Activated CD4-positive, alpha-beta T cell treated with anti-CD3 and anti-CD28 coated beads, Interleukin-2, amount 10 ng/mL, durations not matched to agents 7 days and 5 days (primary cell): ENCODE measurements at regions of chr20 and their contacts with region 1.

Region 1: GRCh38 chr20:64255361-64256281 is at the start of gene PCMTD2:
- DNase-seq: peak; percentile 83
- H3K4me3 Mint-ChIP-seq: peak within 1 kb of the TSS; percentile 88
- H3K27ac Mint-ChIP-seq: peak within 1 kb of the TSS; percentile 95
- H3K4me1 Mint-ChIP-seq: peaks cover 48% of the 10 kb centered on the region
- H3K27me3 Mint-ChIP-seq: peaks cover 11% of the 10 kb centered on the region
- total RNA-seq, gene PCMTD2: 68.4 to 69.3 TPM

Region 2: DNA sequence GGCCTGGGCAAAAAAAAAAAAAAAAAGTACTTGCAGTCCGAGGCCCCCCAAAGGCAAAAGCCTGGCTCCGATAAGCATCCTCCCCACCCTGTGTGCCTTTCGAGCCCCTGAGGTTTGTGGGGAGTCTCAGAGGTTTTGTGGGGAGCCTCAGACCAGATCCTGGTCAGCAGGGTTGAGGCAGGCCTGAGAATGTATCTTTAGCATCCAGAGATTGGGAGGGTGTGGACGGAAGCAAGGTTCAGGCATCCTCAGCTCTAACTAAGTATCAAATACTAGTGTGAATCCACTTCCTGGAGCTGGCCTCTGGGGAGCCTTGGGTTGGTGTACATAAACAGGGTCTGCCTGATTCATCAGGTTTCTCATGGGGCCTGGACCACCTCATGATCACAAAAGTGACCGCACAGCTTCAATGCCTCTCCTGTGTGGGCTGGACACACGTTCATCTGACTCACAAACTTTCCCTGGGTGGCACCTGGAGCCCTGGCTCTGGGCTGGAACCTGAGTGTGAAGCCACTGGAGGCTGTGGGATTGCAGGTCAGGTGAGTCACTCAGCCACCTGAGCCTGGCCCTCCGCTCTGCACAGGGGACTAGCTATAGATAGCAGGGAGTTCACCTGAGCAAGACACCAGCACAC is 24.3 kb after region 1 on chr20:
- CTCF ChIA-PET with region 1: interaction called, 93 read pairs
- POLR2A ChIA-PET with region 1: no interaction called
- DNase-seq: no peak
- H3K4me3 Mint-ChIP-seq: no peak overlapping the region
- H3K27ac Mint-ChIP-seq: no peak overlapping the region
- H3K4me1 Mint-ChIP-seq: peaks cover 16% of the 10 kb centered on the region
- H3K27me3 Mint-ChIP-seq: peaks cover 4% of the 10 kb centered on the region